Mammary epithelial cell (primary cell): ENCODE measurements at regions of chr6 and their contacts with region 1.

Region 1: GRCh38 chr6:118651282-118652050 is at the start of gene CEP85L:
- DNase-seq: peak; percentile 88
- H3K4me3 ChIP-seq: peak within 1 kb of the TSS; percentile 67 to 93 (median 84)
- H3K27ac ChIP-seq: peak within 1 kb of the TSS; percentile 82
- H3K4me1 ChIP-seq: no peaks in the 10 kb centered on the region
- H3K27me3 ChIP-seq: no peaks in the 10 kb centered on the region
- CTCF ChIP-seq: no peak
- total RNA-seq, gene CEP85L: 10.6 to 23.3 TPM

Region 2: DNA sequence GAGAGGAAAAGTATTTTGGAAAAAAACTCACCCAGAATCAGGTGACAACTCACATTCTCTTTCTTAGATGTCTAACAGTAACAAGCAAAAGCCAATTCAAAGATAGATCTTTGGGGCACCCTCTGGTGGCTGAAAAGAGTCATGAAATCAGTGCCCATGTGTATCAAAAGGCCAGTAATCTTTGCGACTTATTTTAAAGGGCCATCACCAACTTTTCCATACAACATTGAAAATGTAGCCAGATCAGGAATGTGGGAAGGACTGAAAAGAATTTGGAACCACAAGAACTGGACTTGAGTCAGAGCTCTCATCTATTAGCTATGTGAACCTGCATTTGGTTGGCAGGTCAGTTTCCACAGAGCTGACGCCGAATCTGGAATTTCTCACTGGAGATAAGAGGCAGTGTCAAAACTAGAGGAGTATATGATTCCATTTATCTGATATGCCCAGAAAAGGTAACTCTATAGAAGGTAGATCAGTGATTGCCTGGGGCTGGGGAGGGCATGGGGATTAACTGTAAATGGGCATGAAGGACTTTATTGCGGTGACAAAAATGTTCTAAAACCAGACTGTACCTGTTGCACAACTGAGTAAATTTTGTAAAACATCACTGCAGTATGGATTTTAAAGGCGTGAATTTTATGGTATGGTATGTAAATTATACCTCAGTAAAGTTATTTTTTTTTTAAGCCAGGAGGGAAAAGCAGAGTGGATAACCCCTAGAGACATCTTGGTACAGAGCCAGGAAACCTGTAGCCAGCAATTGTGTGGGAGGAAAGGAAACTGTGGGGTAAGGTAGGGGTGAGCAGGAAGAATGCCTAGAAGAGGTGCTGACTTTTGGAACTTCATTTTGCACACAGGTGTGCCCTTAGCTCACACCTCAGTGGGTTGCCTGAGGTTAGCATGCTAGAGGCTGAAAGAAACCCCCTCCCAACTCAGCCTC is 125.4 kb after region 1 on chr6:
- CTCF ChIA-PET with region 1: no interaction called
- dilution Hi-C with region 1: no loop called
- in situ Hi-C with region 1: loop called in 1 of 2 experiments (anchors 25 kb)
- intact Hi-C with region 1: loop called (anchors 1 kb)
- DNase-seq: peak; percentile 88
- H3K4me3 ChIP-seq: peak overlapping the region in 2 of 3 experiments; percentile 10 to 23
- H3K27ac ChIP-seq: no peak overlapping the region
- H3K4me1 ChIP-seq: peaks cover 27% of the 10 kb centered on the region
- H3K27me3 ChIP-seq: no peaks in the 10 kb centered on the region
- CTCF ChIP-seq: peak; percentile 82 to 83

Region 3: DNA sequence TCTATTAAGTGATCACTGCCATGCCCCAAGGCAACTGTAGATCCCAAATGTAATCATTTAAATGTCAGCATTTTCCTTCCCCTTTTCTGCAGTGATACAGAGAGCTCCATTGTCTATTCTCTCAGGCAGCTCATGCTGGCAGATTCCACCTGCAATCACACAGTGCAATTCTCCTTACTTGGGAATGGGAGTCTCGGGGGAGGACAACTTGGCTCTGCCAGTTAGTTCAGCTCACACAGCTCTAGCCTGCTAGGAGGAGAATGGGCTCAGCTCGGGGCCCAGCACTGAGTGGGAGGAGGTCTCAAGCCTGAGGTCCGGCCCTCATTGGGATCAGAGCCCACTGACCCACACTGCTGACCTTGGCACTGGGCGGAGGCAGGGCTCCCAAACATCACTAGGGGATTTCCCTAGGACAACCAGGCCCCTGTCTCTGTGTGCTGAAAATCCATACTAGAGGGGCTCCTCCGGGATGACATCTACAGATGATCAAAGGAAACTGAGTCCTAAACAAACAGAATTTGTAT is 133.2 kb after region 1 on chr6:
- CTCF ChIA-PET with region 1: interaction called, 23 read pairs
- dilution Hi-C with region 1: no loop called
- in situ Hi-C with region 1: loop called in 1 of 2 experiments (anchors 25 kb)
- intact Hi-C with region 1: no loop called
- DNase-seq: peak; percentile 53
- H3K4me3 ChIP-seq: no peak overlapping the region
- H3K27ac ChIP-seq: no peak overlapping the region
- H3K4me1 ChIP-seq: peaks cover 24% of the 10 kb centered on the region
- H3K27me3 ChIP-seq: no peaks in the 10 kb centered on the region
- CTCF ChIP-seq: no peak

Region 4: DNA sequence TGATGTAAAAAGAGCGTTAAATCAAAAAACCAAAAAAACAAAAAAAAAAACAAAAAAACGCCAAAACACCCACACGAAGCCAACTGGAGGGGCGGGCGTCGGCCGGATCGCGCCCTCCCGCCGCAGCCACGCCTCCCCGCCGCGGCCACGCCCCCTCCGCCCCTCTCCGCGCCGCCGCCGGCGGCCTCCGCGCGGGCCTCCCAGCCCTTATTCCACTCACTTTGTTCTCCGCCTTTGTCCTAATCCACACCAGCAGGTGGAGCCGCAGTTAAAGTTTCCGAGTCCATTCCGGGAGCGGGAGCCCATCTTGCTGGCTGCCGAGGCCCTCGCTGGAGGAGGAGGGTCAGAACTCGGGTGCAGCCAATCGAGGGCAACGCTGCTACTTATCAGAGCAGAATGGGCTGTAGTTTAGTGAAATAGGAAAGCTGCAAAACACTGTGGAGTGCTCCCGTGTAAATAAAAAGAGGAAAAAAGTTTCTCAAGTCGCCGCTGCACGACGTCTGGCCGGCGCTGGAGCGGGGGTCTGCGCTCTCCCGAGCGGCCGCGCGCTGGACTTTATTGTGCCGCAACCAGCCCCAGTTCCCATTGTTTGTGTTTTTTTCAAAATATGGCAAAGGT is 242.4 kb after region 1 on chr6 and contains the start of gene ASF1A:
- CTCF ChIA-PET with region 1: no interaction called
- dilution Hi-C with region 1: no loop called
- in situ Hi-C with region 1: no loop called
- intact Hi-C with region 1: loop called (anchors 2 kb)
- DNase-seq: peak; percentile 98
- H3K4me3 ChIP-seq: peak within 1 kb of the TSS; percentile 82 to 99 (median 97)
- H3K27ac ChIP-seq: peak within 1 kb of the TSS; percentile 89
- H3K4me1 ChIP-seq: peaks cover 22% of the 10 kb centered on the region
- H3K27me3 ChIP-seq: no peaks in the 10 kb centered on the region
- CTCF ChIP-seq: peak; percentile 50 to 74
- total RNA-seq, gene ASF1A: 19.8 to 29.0 TPM